ENCODE measurements at regions of chr10 and their contacts with region 1.

Region 1: DNA sequence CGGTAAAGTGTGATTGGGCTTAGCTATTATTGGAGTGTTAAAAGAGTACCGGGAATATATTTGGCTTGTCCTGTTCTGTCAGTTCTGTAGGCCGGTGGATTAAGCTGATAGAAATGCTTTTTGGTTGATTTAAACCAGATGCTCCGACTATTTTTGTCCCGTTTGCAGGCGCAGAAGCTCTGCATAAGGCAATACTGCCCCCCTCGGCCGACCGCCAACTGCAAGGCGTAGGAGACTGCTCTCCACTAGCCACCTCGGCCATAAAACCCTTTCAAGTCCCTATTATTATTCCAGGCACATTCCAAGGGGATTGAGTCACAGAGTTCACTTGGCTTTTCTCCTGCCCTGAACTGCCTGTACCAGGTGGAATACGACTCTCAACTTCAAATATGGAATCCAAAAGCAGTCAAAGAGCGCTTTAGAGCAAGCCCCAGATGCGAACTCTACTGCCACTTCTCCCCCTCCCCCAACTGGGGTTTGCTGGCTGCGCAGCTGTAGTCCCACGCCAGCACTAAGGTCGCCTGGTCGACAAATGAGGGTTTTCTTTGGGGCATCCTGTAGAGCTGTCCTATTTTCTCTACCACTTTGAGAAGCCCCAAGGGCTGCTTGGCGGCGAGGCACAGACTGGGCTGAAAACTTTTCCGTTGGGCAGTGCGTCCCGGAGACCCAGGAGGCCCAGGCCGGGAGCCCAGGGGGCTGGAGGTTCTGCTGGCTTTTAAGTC is 108.3 kb downstream of the REEP3 start:
- DNase-seq: peak; percentile 92 to 94
- ATAC-seq: peak; percentile 88 to 92
- H3K4me3 ChIP-seq: peak overlapping the region; percentile 57 to 83 (median 69)
- H3K27ac ChIP-seq: peak overlapping the region; percentile 94 to 99 (median 97)
- H3K4me1 ChIP-seq: peaks cover 16 to 23% of the 10 kb centered on the region in 2 donors
- H3K27me3 ChIP-seq: no peaks in the 10 kb centered on the region
- CTCF ChIP-seq: peak; percentile 36 to 71 (median 62)
- POLR2A ChIP-seq: no peak

Region 2: GRCh38 chr10:63166742-63167258 is 462.7 kb before region 1 on chr10:
- in situ Hi-C with region 1: no loop called
- intact Hi-C with region 1: loop called (anchors 2 kb)
- DNase-seq: no peak
- ATAC-seq: peak; percentile 77 to 81
- H3K4me3 ChIP-seq: no peak overlapping the region
- H3K27ac ChIP-seq: peak overlapping the region in 1 of 4 donors; percentile 29
- H3K4me1 ChIP-seq: peaks cover 0 to 11% of the 10 kb centered on the region in 2 donors
- H3K27me3 ChIP-seq: no peaks in the 10 kb centered on the region
- CTCF ChIP-seq: peak; percentile 67 to 85 (median 78)
- POLR2A ChIP-seq: no peak

Region 3: GRCh38 chr10:63268798-63269503 is 360.6 kb before region 1 on chr10:
- in situ Hi-C with region 1: no loop called
- intact Hi-C with region 1: loop called (anchors 2 kb)
- DNase-seq: peak; percentile 95
- ATAC-seq: peak; percentile 98
- H3K4me3 ChIP-seq: peak overlapping the region; percentile 51 to 64 (median 54)
- H3K27ac ChIP-seq: peak overlapping the region; percentile 88 to 96 (median 90)
- H3K4me1 ChIP-seq: peaks cover 26% of the 10 kb centered on the region in 2 donors
- H3K27me3 ChIP-seq: no peaks in the 10 kb centered on the region
- CTCF ChIP-seq: peak; percentile 51 to 62 (median 55)
- POLR2A ChIP-seq: peak; percentile 82 to 94

Region 4: GRCh38 chr10:63465293-63466143 is 164.0 kb before region 1 on chr10 and contains the start of gene JMJD1C:
- in situ Hi-C with region 1: no loop called
- intact Hi-C with region 1: loop called (anchors 1 kb)
- DNase-seq: peak; percentile 48 to 78
- ATAC-seq: peak; percentile 84 to 88
- H3K4me3 ChIP-seq: peak within 1 kb of the TSS; percentile 82 to 95 (median 92)
- H3K27ac ChIP-seq: peak within 1 kb of the TSS; percentile 93 to 95 (median 94)
- H3K4me1 ChIP-seq: peaks cover 26% of the 10 kb centered on the region in 2 donors
- H3K27me3 ChIP-seq: no peaks in the 10 kb centered on the region
- CTCF ChIP-seq: peak in 2 of 5 experiments; percentile 13 to 20
- POLR2A ChIP-seq: peak; percentile 79 to 82
- total RNA-seq, gene JMJD1C: 22.5 to 74.1 (median 46.9) TPM

Region 5: DNA sequence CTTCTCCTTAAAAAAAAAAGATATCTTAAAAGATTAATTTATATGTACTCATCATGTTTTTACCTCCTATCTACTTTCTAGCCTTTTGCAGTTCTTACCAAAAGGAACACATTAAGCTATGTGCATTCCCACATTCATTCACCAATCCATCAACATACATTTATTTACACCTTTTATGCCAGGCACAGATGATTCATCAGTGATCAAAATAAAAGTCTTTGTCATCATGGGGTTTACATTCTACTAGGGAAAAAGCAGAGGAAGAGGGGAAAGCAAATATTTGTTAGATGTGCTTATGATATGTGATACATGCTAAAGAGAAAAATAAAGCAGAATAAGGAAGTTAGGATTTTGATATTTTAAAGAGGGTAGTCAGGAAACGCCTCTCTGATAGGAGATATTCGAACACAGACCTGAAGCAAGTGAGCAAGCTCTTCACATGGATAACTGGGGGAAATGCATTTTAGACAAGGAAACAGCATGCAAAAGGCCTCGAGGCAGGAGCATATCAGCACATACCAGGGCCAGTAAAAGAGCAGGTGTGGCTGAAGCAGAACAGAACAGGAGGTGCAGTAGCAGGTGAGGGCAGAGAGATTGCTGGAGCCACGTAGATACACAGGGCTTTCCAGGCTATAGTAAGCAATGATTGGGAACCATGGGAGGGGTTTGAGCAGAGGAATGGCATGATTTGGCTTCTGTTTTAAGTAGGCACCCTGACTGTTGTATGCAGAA is 40.9 kb before region 1 on chr10:
- in situ Hi-C with region 1: no loop called
- intact Hi-C with region 1: loop called (anchors 5 kb)
- DNase-seq: no peak
- ATAC-seq: no peak
- H3K4me3 ChIP-seq: no peak overlapping the region
- H3K27ac ChIP-seq: no peak overlapping the region
- H3K4me1 ChIP-seq: peaks cover 37 to 41% of the 10 kb centered on the region in 2 donors
- H3K27me3 ChIP-seq: no peaks in the 10 kb centered on the region
- CTCF ChIP-seq: no peak
- POLR2A ChIP-seq: no peak

Region 6: DNA sequence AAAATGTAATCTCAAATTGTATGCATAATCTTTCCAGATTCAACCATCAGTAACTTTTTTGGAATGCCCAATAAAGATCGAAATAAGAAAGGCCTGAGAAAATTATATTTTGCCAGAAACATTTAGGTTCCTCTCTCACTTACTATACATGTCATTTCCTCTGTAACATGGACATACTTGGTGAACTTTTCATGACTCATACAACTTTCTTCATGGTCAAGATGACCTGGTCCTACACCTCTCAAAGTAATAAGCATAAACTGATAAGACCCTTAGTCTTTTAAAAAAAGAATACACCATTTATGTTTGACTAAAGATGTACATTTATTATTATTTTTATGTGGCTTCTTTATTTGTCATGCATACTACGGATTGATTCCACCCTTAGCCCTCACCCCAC is 17.0 kb after region 1 on chr10:
- in situ Hi-C with region 1: no loop called
- intact Hi-C with region 1: no loop called
- DNase-seq: no peak
- ATAC-seq: no peak
- H3K4me3 ChIP-seq: no peak overlapping the region
- H3K27ac ChIP-seq: peak overlapping the region in 1 of 4 donors; percentile 76
- H3K4me1 ChIP-seq: peaks cover 0 to 16% of the 10 kb centered on the region in 2 donors
- H3K27me3 ChIP-seq: no peaks in the 10 kb centered on the region
- CTCF ChIP-seq: no peak
- POLR2A ChIP-seq: no peak

Region 7: DNA sequence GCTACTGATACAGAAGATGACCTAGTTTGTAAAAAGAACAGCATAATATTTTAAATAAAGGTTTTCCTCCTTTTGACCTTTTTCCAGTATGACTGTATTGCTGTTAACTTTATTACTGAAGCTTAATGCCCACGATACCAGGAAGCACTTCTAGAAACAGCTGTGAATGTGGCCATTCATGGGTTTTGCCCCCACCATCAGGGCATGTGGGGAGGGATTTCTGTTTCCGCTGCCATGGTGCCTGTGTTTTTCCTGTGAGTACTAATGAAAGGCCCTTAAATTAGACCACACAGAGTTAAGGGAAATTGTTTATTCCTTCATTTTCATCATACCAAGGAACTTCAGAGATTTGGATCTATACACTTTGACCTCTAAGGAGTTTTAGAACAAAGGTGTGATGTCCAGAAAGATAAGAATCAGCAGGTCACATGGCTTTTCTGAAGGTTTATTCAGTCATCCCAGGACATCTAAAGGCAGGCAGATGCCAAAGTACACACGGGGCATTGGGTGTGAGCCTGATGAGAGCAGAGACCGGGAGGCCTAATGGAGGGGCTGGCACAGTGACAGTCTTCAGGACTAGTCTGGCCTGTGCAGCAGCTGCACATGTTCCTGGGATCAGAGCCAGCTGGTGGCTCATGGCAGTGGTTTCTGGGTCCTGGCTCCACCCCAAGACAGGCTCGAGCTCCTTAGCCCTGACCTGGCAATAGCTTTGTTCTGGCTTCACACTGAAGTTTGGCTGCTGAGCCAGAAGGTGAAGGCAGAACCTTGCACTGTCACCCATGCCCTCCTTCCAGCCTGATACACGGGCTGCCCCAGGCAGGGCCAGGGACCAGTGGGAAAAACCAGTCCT is 82.6 kb after region 1 on chr10:
- in situ Hi-C with region 1: loop called in 3 of 4 experiments (anchors 5 to 10 kb)
- intact Hi-C with region 1: loop called (anchors 2 kb)
- DNase-seq: peak; percentile 94 to 97
- ATAC-seq: peak; percentile 84
- H3K4me3 ChIP-seq: no peak overlapping the region
- H3K27ac ChIP-seq: peak overlapping the region; percentile 81 to 88 (median 85)
- H3K4me1 ChIP-seq: peaks cover 34 to 49% of the 10 kb centered on the region in 2 donors
- H3K27me3 ChIP-seq: no peaks in the 10 kb centered on the region
- CTCF ChIP-seq: no peak
- POLR2A ChIP-seq: no peak